ENCODE measurements at regions of chr20 and their contacts with region 1.

Region 1: DNA sequence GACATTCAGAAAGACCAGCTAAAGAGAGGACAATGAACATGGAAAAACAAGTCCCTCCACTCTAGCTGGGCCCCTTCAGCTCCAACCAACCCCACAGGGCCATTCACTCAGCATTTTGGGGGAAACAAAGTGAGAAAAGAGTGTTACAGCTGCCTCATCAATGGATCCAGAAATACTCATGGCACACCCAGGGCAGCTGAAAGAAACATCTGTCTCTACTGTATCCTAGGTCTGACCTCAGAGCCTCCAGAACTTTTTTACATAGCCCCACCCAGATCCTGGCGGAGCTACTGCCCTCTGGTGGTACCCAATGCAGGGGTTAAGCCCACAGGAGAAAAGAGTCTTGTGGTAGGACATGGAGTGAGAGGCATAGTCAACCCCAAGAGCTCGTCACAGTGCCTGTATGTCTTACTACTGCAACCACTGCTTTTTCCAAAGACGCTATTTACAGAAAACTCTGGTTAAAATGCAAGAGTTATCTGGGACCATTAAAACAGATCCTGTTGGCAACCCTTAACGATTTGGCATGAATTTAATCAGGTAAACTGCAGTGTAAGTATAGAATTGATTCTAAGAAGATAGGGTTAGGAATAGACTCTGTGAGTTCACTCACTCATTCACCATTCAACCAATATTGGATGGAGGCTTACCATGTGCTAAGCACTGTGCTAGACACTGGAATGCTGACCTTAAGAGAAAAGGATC is 37.4 kb upstream of the FAM83C start:
- DNase-seq: peak; percentile 75
- ATAC-seq: peak; percentile 58
- H3K4me3 ChIP-seq: no peak overlapping the region
- H3K27ac ChIP-seq: peak overlapping the region; percentile 74
- H3K4me1 ChIP-seq: peaks cover 58% of the 10 kb centered on the region
- H3K27me3 ChIP-seq: no peaks in the 10 kb centered on the region
- CTCF ChIP-seq: peak; percentile 85
- EP300 ChIP-seq: 0 out of 4 replicates have a peak, but pooled peaks of 1 of the 2 experiments have one; percentile 3
- POLR2A ChIP-seq: no peak
- RAD21 ChIP-seq: peak; percentile 91

Region 2: GRCh38 chr20:35284267-35284991 is 45.2 kb before region 1 on chr20 and contains the start of gene EIF6:
- CTCF ChIA-PET with region 1: no interaction called
- POLR2A ChIA-PET with region 1: interaction called, 23 read pairs
- in situ Hi-C with region 1: no loop called
- intact Hi-C with region 1: no loop called
- DNase-seq: peak; percentile 99
- ATAC-seq: peak; percentile 76
- H3K4me3 ChIP-seq: peak within 1 kb of the TSS; percentile 80 to 98 (median 81)
- H3K27ac ChIP-seq: peak within 1 kb of the TSS; percentile 95
- H3K4me1 ChIP-seq: peaks cover 74% of the 10 kb centered on the region
- H3K27me3 ChIP-seq: peaks cover 0 to 2% of the 10 kb centered on the region in 2 experiments; a peak in 2 of 5 replicates
- CTCF ChIP-seq: peak; percentile 19; the same call in 1 of the 2 replicates
- EP300 ChIP-seq: peak; percentile 43 to 59; a peak in 3 of 4 replicates
- POLR2A ChIP-seq: peak; percentile 94 to 96
- RAD21 ChIP-seq: peak; percentile 44
- total RNA-seq, gene EIF6: 462 and 603 TPM in 2 replicates

Region 3: GRCh38 chr20:35297155-35297554 is 32.4 kb before region 1 on chr20:
- CTCF ChIA-PET with region 1: interaction called, 204 read pairs
- POLR2A ChIA-PET with region 1: interaction called, 4 read pairs
- in situ Hi-C with region 1: loop called (anchors 5 kb)
- intact Hi-C with region 1: no loop called
- DNase-seq: no peak
- ATAC-seq: peak; percentile 68
- H3K4me3 ChIP-seq: 0 out of 6 replicates have a peak overlapping the region, but pooled peaks of 1 of the 3 experiments have one; percentile 8
- H3K27ac ChIP-seq: no peak overlapping the region
- H3K4me1 ChIP-seq: peaks cover 45% of the 10 kb centered on the region
- H3K27me3 ChIP-seq: peaks cover 5 to 39% of the 10 kb centered on the region in 2 experiments
- CTCF ChIP-seq: 0 out of 2 replicates have a peak, but pooled peaks have one; percentile 8
- EP300 ChIP-seq: no peak
- POLR2A ChIP-seq: no peak
- RAD21 ChIP-seq: no peak

Region 4: GRCh38 chr20:35318502-35319157 is 11.0 kb before region 1 on chr20:
- CTCF ChIA-PET with region 1: no interaction called
- POLR2A ChIA-PET with region 1: interaction called, 21 read pairs
- in situ Hi-C with region 1: no loop called
- intact Hi-C with region 1: no loop called
- DNase-seq: peak; percentile 71
- ATAC-seq: no peak
- H3K4me3 ChIP-seq: no peak overlapping the region
- H3K27ac ChIP-seq: no peak overlapping the region
- H3K4me1 ChIP-seq: peaks cover 25% of the 10 kb centered on the region
- H3K27me3 ChIP-seq: no peaks in the 10 kb centered on the region
- CTCF ChIP-seq: no peak
- EP300 ChIP-seq: no peak
- POLR2A ChIP-seq: no peak
- RAD21 ChIP-seq: no peak

Region 5: DNA sequence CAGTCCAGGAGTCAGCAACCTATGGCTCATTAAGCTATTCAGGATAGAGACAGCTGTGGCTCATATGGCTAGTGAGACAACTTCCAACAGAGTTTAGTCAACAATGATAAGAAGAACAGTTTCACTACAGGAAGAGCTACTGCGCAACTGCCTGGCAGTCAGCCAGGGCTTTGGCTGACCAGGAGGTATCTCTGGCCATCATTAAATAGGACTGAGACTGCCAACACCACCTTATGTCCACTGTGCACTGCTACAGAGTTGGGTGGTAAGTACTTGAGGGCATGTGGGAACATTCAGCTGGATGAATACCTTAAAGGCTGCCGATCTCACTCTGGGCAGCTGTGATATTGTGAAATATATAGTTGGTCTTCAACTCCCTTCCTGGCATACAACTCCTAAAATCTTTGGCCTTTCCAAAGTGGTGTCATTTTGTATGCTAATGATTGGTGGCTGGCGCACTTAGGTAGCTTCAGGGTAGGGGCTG is 14.8 kb after region 1 on chr20:
- CTCF ChIA-PET with region 1: no interaction called
- POLR2A ChIA-PET with region 1: interaction called, 10 read pairs
- in situ Hi-C with region 1: no loop called
- intact Hi-C with region 1: no loop called
- DNase-seq: peak; percentile 92
- ATAC-seq: peak; percentile 81
- H3K4me3 ChIP-seq: no peak overlapping the region
- H3K27ac ChIP-seq: peak overlapping the region; percentile 1
- H3K4me1 ChIP-seq: peaks cover 14% of the 10 kb centered on the region
- H3K27me3 ChIP-seq: no peaks in the 10 kb centered on the region
- CTCF ChIP-seq: 0 out of 2 replicates have a peak, but pooled peaks have one; percentile 3
- EP300 ChIP-seq: peak in 1 of 2 experiments; percentile 36; a peak in 3 of 4 replicates
- POLR2A ChIP-seq: no peak
- RAD21 ChIP-seq: no peak